ENCODE measurements at regions of chr7 and their contacts with region 1.

Region 1: DNA sequence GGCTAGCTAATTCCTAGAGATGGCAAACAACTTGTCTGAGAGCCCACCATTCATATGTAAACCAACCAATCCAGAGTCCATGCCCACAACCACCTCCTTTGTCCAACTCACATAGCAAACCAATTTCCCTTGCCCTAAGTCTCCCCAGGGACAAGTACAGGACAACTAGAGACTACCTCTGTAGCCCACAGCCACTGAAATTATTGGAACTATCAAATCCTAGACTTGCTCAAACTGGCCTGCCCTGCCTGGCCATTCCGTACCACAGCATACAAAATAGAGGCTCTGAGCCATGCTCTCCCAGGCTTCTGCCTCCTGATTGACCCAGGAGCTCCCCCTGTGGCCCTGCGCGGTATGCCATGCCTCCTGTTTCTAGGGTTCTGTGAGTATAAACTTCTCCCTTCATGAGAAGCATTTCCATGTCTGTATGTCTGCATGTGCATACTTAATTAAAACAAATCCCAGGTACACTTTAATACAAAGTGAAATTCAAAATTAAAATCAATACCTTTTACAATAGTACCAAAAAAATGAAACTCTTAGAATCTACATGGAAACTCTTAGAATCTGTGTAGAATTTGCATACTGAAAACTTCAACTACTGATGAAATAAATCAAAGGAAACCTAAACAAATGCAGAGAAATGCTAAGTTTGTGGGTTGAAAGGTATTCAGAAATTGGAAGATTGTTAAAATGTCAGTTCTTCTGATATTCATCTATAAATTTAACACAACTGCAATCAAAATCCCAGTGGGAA is 4.0 kb upstream of the HECW1 start:
- DNase-seq: no peak
- H3K4me3 ChIP-seq: no peak overlapping the region
- H3K27ac ChIP-seq: no peak overlapping the region
- H3K27me3 ChIP-seq: peaks cover 33% of the 10 kb centered on the region
- CTCF ChIP-seq: peak; percentile 97

Region 2: DNA sequence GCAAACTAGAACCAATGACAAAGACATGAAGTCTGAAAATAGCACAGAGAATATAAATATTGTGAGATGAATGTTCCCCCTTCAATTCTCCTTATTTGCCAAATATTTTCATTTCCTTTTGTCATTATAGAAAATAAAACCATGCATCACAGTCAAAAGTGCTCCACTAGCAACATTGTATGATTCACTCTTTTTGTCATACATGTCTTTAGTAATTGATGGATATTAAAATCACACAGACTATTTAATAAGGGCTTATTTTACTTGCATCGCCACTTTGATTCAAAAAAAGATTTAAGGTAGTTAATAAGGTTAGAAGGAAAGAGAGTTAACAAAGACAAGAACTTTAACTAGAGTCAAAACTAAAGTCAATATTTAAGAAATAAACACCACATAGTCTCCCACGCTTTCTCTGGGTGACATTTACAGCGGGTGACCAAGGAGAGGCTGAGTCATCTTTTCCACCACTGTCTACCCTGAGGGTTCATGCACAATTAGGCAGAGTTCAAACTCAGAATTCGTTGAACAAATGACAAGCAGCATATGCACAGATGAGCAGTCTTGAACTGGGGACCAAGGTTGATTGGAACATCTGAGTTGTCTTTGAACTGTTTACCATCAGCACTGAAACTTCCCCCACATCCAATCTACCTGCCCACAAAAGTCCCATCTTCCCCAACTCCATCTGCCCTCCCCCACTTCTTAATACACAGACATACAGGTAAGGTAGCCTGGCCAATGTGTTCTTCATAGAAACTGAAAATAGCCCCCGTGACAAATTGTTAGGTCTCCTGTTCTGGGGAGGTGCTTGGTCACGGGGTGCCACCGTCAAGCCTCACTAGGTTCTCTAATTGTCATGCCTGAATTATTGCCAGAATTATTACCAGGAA is 239.1 kb before region 1 on chr7:
- CTCF ChIA-PET with region 1: no interaction called
- POLR2A ChIA-PET with region 1: no interaction called
- DNase-seq: no peak
- H3K4me3 ChIP-seq: no peak overlapping the region
- H3K27ac ChIP-seq: no peak overlapping the region
- H3K27me3 ChIP-seq: peaks cover 2% of the 10 kb centered on the region
- CTCF ChIP-seq: no peak

Region 3: GRCh38 chr7:42931834-42932651 is 176.4 kb before region 1 on chr7 and contains the starts of genes MRPL32 and PSMA2:
- CTCF ChIA-PET with region 1: interaction called, 10 read pairs
- POLR2A ChIA-PET with region 1: no interaction called
- DNase-seq: peak; percentile 93
- H3K4me3 ChIP-seq: peak within 1 kb of the TSS; percentile 93
- H3K27ac ChIP-seq: peak within 1 kb of the TSS; percentile 76
- H3K27me3 ChIP-seq: no peaks in the 10 kb centered on the region
- CTCF ChIP-seq: no peak
- polyA plus RNA-seq, gene MRPL32: 51.6 and 68.5 TPM in 2 replicates
- polyA plus RNA-seq, gene PSMA2: 142 and 233 TPM in 2 replicates

Region 4: DNA sequence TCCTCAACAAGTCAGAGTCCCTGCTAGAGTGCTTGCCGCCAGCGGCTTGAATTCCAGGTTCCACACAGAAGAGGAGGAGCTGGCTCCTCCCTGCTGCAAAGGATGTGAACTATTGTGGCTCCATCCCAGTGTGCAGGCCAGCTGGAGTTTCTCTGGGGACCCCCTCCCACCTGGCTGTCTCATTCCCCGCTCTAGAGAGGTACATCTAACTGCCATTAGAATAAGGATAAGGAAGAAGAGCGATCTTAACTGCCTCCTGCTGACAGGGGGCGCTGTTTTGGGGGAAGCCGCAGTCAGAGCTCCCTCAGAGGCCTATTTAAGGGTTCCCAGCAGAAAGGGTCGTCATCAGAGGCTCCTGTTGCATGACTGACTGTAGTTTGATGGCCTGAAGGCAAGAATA is 36.8 kb before region 1 on chr7:
- CTCF ChIA-PET with region 1: interaction called, 17 read pairs
- POLR2A ChIA-PET with region 1: interaction called, 5 read pairs
- DNase-seq: no peak
- H3K4me3 ChIP-seq: no peak overlapping the region
- H3K27ac ChIP-seq: no peak overlapping the region
- H3K27me3 ChIP-seq: peaks cover 4% of the 10 kb centered on the region
- CTCF ChIP-seq: peak; percentile 41

Region 5: DNA sequence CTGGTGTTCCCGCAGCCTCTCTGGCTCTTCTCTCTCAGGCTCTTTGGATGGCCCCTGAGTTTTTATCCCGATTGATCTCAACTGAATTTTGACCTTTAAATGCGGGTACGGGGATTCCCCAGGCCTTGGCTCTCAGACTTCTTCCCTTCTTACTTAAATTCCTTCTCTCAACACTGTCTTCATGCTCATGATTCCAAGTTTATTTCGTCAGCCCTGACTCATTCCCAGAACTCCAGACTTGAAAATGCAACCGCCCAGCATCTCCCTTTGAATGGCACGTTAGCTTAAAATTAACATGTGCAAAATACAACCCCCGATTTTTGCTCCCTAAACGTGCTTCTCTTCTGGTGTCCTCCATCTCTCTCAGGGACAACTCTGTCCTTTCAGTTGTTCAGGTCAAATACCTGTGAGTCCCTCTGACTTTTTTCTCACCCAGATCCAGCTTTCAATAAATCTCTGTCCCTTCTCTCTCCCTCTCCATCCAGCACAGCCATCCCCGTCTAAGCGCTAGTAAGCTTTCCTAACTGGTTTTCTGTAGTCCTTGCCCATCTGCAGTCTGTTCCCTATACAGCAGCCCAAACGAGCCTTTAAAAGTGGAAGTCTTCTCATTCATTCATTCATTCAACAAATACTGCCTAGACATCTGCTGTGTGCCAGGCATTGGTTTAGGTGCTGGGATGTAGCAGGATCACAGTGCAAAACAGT is 11.1 kb after region 1 on chr7:
- CTCF ChIA-PET with region 1: interaction called, 20 read pairs
- POLR2A ChIA-PET with region 1: no interaction called
- DNase-seq: peak; percentile 53
- H3K4me3 ChIP-seq: no peak overlapping the region
- H3K27ac ChIP-seq: peak overlapping the region; percentile 47
- H3K27me3 ChIP-seq: peaks cover 13% of the 10 kb centered on the region
- CTCF ChIP-seq: no peak